ENCODE measurements at regions of chr4 and their contacts with region 1.

Region 1: DNA sequence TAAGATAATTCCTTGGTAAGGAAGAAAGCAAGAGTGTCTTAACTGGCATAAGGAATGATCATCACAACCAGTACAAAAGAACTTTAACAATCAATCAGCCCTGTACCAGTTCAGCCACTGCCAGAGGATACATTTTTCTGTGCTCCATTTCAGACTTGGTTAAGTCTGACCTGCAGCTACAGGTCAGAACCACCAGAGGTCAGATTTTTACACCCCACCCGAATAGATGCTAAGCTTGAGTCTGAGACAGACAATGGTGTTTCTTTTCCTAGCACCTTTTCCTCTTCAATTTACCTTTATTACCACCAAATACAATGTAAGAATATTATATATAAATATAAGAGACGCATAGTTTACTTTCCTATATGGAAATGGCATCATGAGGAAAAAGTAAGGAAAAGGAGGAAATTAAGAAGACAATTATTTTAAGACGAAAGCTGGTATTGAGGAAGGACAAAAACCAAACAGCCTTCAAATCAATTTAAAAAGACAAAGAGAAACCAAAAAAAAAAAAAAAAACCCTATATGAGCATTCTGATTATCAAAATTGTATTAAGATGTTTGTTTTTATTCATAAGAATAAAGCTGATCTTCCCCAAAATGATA is 215.3 kb upstream of the TTC29 start:
- DNase-seq: peak; percentile 58
- ATAC-seq: no peak
- H3K4me3 ChIP-seq: no peak overlapping the region
- H3K27ac ChIP-seq: no peak overlapping the region
- H3K4me1 ChIP-seq: peaks cover 6% of the 10 kb centered on the region
- H3K27me3 ChIP-seq: no peaks in the 10 kb centered on the region
- CTCF ChIP-seq: peak; percentile 72

Region 2: DNA sequence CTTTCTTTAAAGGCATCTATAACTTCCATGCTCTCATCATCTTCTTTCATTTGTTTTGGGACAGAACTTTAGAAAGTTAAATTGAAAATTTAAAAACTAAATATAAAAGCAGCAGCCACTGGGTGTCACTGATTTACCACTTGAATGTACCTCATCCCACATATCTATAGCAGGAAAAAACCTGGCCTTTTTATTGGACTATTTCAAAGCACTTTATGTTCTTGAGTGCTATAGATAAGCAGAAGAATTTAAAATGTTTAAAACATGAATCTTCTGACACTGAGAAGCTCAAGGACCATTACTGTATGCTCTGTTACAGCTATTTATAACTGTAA is 50.0 kb before region 1 on chr4:
- CTCF ChIA-PET with region 1: no interaction called
- POLR2A ChIA-PET with region 1: no interaction called
- intact Hi-C with region 1: loop called (anchors 5 kb)
- DNase-seq: peak; percentile 43
- ATAC-seq: peak; percentile 38; the same call in 1 of the 2 replicates
- H3K4me3 ChIP-seq: no peak overlapping the region
- H3K27ac ChIP-seq: no peak overlapping the region
- H3K4me1 ChIP-seq: no peaks in the 10 kb centered on the region
- H3K27me3 ChIP-seq: no peaks in the 10 kb centered on the region
- CTCF ChIP-seq: peak; percentile 59

Region 3: DNA sequence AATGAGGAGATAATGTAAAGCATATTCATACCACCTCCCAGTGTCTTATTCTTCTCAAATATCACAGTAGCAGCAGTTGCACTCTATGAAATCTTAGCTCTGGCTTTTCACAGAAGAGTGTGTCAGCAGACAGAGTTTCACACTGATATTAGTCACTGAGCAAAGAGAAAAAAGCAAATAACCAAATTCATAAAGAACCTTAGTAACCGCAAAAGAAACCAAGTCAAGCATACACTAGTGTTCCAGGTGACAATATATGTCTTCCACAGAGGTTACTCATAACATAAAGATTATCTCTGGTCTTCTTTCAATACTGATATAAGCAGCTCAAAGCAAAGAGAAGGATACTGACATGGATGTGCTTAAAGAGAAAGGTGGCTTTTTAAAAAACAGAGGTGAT is 138.2 kb after region 1 on chr4:
- CTCF ChIA-PET with region 1: no interaction called
- POLR2A ChIA-PET with region 1: no interaction called
- intact Hi-C with region 1: loop called (anchors 5 kb)
- DNase-seq: peak; percentile 85
- ATAC-seq: peak; percentile 94
- H3K4me3 ChIP-seq: no peak overlapping the region
- H3K27ac ChIP-seq: peak overlapping the region; percentile 78
- H3K4me1 ChIP-seq: peaks cover 19% of the 10 kb centered on the region
- H3K27me3 ChIP-seq: no peaks in the 10 kb centered on the region
- CTCF ChIP-seq: no peak

Region 4: DNA sequence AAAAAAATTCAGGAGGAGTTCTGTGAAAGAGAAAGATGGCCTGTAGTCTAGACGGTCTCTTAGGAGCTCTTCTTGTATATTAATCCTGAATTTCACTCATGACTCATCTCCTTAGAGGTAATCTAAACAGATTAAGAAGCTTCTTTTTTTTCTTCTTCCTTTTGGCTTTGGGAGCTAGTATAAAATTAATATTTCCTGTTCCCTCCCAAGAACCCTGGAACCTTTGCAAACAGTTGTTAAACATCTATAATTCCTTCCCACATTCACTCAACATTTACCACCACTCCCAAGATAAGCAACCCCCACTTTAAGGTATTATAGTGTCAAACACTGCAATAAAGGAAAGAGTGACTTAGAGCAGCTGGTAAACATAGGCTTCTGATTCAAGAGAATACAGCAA is 173.5 kb after region 1 on chr4:
- CTCF ChIA-PET with region 1: no interaction called
- POLR2A ChIA-PET with region 1: no interaction called
- intact Hi-C with region 1: loop called (anchors 1 kb)
- DNase-seq: peak; percentile 73
- ATAC-seq: peak; percentile 96
- H3K4me3 ChIP-seq: no peak overlapping the region
- H3K27ac ChIP-seq: peak overlapping the region; percentile 59
- H3K4me1 ChIP-seq: peaks cover 14% of the 10 kb centered on the region; the same call in 1 of the 2 replicates
- H3K27me3 ChIP-seq: no peaks in the 10 kb centered on the region
- CTCF ChIP-seq: no peak

Region 5: GRCh38 chr4:147371661-147372060 is 210.7 kb after region 1 on chr4:
- CTCF ChIA-PET with region 1: no interaction called
- POLR2A ChIA-PET with region 1: no interaction called
- intact Hi-C with region 1: loop called (anchors 5 kb)
- DNase-seq: peak; percentile 91
- ATAC-seq: peak; percentile 88
- H3K4me3 ChIP-seq: no peak overlapping the region
- H3K27ac ChIP-seq: peak overlapping the region; percentile 94
- H3K4me1 ChIP-seq: peaks cover 24% of the 10 kb centered on the region
- H3K27me3 ChIP-seq: no peaks in the 10 kb centered on the region
- CTCF ChIP-seq: no peak

Region 6: GRCh38 chr4:147578051-147578476 is 417.1 kb after region 1 on chr4:
- CTCF ChIA-PET with region 1: no interaction called
- POLR2A ChIA-PET with region 1: no interaction called
- intact Hi-C with region 1: loop called (anchors 5 kb)
- DNase-seq: peak; percentile 96
- ATAC-seq: peak; percentile 93
- H3K4me3 ChIP-seq: no peak overlapping the region
- H3K27ac ChIP-seq: peak overlapping the region; percentile 91
- H3K4me1 ChIP-seq: peaks cover 47% of the 10 kb centered on the region
- H3K27me3 ChIP-seq: no peaks in the 10 kb centered on the region
- CTCF ChIP-seq: no peak

Region 7: DNA sequence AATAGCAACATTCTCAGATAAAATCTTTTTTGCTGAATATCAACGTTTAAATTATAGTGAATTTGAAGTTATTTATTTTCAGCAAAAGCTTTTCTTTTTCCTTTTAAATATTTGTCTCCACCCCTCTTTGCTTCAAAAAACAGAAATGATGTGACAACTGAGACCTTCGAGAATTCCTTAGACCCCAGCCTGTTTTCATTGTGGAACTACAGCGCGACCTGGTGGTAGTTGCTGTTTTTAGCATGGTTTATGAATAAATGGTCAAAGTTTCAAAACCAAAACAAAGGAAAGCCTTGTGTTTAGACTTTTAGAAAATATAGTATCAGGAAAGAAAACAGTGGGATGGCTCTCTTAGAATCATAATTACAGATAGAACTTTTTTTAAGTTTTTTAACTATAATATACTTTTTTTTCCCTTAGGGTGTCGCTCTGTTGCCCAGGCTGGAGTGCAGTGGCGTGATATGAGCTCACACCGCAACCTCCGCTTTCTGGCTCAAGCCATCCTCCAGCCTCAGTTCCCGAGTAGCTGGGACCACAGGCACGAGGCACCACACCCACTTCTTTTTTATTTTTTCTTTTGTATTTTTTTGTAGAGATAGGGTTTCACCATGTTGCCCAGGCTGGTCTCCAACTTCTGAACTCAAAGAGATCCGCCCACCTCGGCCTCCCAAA is 429.4 kb after region 1 on chr4:
- CTCF ChIA-PET with region 1: interaction called, 4 read pairs
- POLR2A ChIA-PET with region 1: no interaction called
- intact Hi-C with region 1: loop called (anchors 1 kb)
- DNase-seq: peak; percentile 79
- ATAC-seq: peak; percentile 38
- H3K4me3 ChIP-seq: no peak overlapping the region
- H3K27ac ChIP-seq: no peak overlapping the region
- H3K4me1 ChIP-seq: 0 out of 2 replicates have a peak, but pooled peaks cover 7% of the 10 kb centered on the region
- H3K27me3 ChIP-seq: no peaks in the 10 kb centered on the region
- CTCF ChIP-seq: peak; percentile 74

Measured in PC-3 (cell line).